Cardiac septum (tissue), 1 donor: ENCODE measurements at regions of chr3 and their contacts with region 1.

Region 1: GRCh38 chr3:71734883-71735282 is 9.7 kb upstream of the EIF4E3 start:
- DNase-seq: no peak

Region 2: DNA sequence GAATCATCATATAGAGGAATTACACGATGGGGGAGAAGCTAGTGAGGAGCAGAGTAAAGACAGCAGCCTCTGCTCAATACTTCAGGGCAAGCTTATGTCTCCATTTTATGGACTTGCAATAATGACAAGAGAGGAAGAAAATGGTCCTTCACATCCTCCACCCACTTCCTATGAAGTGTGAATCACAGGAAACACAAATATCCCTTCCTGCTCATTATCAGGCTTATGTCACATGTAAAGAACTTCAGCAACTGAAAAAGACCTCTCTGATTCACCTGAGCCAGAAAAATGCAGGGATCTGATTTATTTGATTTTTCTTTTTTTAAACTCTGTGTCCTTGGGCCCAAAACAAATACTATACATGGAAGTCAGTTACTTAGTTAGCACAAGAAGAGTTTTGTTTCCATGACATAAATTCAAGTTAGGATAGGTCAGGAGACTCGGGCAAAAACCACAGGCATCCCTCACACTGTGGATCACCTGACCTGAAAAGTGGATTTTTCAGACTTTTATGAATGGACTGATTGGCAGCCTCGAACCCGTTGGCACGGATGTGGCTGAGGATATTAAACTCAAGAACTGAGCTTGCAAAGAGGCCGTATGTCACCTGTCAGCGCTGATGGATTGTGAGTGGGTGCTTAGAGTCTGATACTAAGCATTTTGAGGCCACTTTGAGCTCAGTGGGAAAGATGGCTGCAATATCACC is 801.6 kb before region 1 on chr3:
- intact Hi-C with region 1: no loop called
- DNase-seq: no peak

Region 3: GRCh38 chr3:71859123-71859519 is 124.2 kb after region 1 on chr3:
- intact Hi-C with region 1: loop called (anchors 5 kb)
- DNase-seq: no peak

Region 4: GRCh38 chr3:71984843-71985613 is 250.1 kb after region 1 on chr3:
- intact Hi-C with region 1: no loop called
- DNase-seq: no peak